Activated CD4-positive, alpha-beta T cell treated with anti-CD3 and anti-CD28 coated beads, Interleukin-2, amount 10 ng/mL, durations not matched to agents 7 days and 5 days (primary cell): ENCODE measurements at regions of chr12 and their contacts with region 1.

Region 1: GRCh38 chr12:6965026-6965661 is 5.3 kb downstream of the PHB2 start:
- DNase-seq: peak; percentile 91
- H3K4me3 Mint-ChIP-seq: no peak overlapping the region
- H3K27ac Mint-ChIP-seq: peak overlapping the region; percentile 85
- H3K4me1 Mint-ChIP-seq: peaks cover 68% of the 10 kb centered on the region
- H3K27me3 Mint-ChIP-seq: no peaks in the 10 kb centered on the region

Region 2: DNA sequence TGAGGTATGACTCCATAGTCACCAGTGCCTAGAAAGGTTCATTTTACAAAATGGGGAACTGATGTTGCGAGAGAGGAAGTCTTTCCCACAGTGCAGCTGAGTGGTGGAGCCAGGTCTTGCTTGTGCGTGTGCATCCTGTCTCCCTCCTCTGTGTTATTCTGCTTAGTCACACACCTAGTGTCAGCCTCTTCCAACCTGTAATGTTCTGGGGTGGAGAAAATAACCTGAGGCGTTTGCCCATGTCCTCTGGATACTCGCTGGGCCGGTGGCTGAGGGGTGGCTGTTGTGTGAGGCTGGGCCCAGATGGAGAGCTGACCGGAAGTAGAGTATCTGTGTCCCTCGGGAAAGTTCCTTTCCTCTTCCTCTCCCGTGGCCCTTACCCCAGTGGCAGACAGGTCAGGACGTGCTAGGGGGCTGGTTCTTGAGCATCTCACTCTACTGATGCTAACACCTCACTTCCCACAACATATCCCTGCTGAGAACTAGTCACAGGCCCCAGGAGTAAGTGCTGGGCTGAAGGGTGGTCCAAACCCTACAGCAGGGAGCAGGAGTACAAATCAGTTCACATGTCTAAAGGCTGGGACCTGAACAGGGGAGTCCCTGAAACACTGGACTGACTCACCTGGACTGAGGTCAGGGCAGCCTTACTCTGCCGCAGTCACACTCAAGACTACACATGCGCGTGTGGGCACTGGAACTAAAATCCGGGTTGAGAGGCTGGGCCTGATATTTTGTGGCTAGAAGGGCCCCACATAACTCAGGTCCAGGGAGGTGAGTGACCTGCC is 219.2 kb before region 1 on chr12:
- CTCF ChIA-PET with region 1: no interaction called
- POLR2A ChIA-PET with region 1: no interaction called
- DNase-seq: peak; percentile 54
- H3K4me3 Mint-ChIP-seq: no peak overlapping the region
- H3K27ac Mint-ChIP-seq: peak overlapping the region; percentile 95
- H3K4me1 Mint-ChIP-seq: peaks cover 26% of the 10 kb centered on the region
- H3K27me3 Mint-ChIP-seq: no peaks in the 10 kb centered on the region

Region 3: GRCh38 chr12:6937481-6938297 is 27.5 kb before region 1 on chr12:
- CTCF ChIA-PET with region 1: interaction called, 388 read pairs
- POLR2A ChIA-PET with region 1: no interaction called
- DNase-seq: peak; percentile 95
- H3K4me3 Mint-ChIP-seq: peak overlapping the region; percentile 81
- H3K27ac Mint-ChIP-seq: peak overlapping the region; percentile 97
- H3K4me1 Mint-ChIP-seq: peaks cover 59% of the 10 kb centered on the region
- H3K27me3 Mint-ChIP-seq: no peaks in the 10 kb centered on the region

Region 4: GRCh38 chr12:6944381-6945186 is 20.6 kb before region 1 on chr12:
- CTCF ChIA-PET with region 1: interaction called, 388 read pairs
- POLR2A ChIA-PET with region 1: interaction called, 36 read pairs
- DNase-seq: peak; percentile 92
- H3K4me3 Mint-ChIP-seq: peak overlapping the region; percentile 97
- H3K27ac Mint-ChIP-seq: peak overlapping the region; percentile 96
- H3K4me1 Mint-ChIP-seq: peaks cover 68% of the 10 kb centered on the region
- H3K27me3 Mint-ChIP-seq: no peaks in the 10 kb centered on the region

Region 5: DNA sequence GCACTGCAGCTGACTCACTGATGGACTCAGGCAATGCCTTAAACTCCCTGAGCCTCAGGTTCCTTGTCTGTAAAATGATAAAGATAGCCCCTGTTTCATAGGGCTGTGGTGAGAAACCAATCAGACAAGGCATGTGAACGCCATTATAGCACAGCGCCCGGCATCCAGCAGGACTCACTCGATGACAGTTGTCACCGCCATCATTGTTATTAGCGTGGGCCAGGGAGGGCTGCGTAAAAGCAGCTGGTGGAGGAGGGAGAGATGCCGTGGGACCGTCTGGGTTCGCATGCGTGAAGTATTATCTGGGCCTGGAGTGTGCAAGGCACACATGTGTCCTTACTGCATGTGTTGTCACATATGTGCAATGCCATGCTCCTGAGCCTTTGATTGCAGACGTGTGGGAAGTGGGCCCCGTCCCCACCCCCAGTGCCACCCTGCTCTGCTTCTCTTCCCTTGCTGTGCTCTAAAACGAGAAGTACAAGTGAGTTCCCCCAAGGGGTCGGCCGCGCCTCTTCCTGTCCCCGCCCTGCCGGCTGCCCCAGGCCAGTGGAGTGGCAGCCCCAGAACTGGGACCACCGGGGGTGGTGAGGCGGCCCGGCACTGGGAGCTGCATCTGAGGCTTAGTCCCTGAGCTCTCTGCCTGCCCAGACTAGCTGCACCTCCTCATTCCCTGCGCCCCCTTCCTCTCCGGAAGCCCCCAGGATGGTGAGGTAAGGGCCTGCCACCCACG is 14.2 kb before region 1 on chr12 and contains the start of gene PTPN6:
- CTCF ChIA-PET with region 1: interaction called, 388 read pairs
- POLR2A ChIA-PET with region 1: interaction called, 36 read pairs
- DNase-seq: peak; percentile 68
- H3K4me3 Mint-ChIP-seq: peak within 1 kb of the TSS; percentile 100
- H3K27ac Mint-ChIP-seq: peak within 1 kb of the TSS; percentile 98
- H3K4me1 Mint-ChIP-seq: peaks cover 64% of the 10 kb centered on the region
- H3K27me3 Mint-ChIP-seq: no peaks in the 10 kb centered on the region
- total RNA-seq, gene PTPN6: 346 to 354 TPM

Region 6: GRCh38 chr12:7369274-7369729 is 404.2 kb after region 1 on chr12:
- CTCF ChIA-PET with region 1: no interaction called
- POLR2A ChIA-PET with region 1: no interaction called
- DNase-seq: no peak
- H3K4me3 Mint-ChIP-seq: no peak overlapping the region
- H3K27ac Mint-ChIP-seq: no peak overlapping the region
- H3K4me1 Mint-ChIP-seq: no peaks in the 10 kb centered on the region
- H3K27me3 Mint-ChIP-seq: peaks cover 16% of the 10 kb centered on the region